IMR-90 (cell line): ENCODE measurements at regions of chr13 and their contacts with region 1.

Region 1: DNA sequence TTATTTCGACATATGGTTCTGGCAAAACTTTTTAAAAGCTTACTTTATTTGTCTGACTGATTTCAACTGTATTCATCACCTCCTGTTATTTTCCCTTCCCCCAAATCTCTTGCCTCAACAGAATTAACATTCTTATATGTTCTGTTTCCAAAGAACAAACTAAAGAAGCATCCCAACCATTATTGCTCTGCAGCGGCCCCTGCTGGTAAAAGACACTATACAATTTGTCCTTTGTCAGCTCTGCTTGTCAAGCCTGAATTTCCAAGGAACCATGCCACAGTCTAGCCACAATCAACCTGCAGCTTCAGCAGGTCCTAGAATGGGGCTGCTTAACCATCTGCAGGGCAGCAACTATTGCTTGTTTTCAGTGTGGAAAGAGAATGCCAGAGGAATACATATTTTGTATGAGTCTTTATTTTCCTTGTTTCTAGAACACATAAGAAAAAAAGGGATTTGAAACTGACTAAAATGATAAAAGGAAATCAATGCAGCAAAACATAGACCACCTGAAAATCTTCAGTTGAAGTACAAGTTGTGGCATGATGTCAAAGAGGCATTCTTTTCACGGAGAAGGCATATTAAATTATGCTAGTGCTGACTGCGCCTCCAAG is 845.3 kb downstream of the DIAPH3 start:
- DNase-seq: peak; percentile 46
- ATAC-seq: peak; percentile 77
- H3K4me3 ChIP-seq: no peak overlapping the region
- H3K27ac ChIP-seq: no peak overlapping the region
- H3K4me1 ChIP-seq: no peaks in the 10 kb centered on the region
- H3K27me3 ChIP-seq: no peaks in the 10 kb centered on the region
- CTCF ChIP-seq: peak; percentile 69
- POLR2A ChIP-seq: no peak
- RAD21 ChIP-seq: peak; percentile 67

Region 2: DNA sequence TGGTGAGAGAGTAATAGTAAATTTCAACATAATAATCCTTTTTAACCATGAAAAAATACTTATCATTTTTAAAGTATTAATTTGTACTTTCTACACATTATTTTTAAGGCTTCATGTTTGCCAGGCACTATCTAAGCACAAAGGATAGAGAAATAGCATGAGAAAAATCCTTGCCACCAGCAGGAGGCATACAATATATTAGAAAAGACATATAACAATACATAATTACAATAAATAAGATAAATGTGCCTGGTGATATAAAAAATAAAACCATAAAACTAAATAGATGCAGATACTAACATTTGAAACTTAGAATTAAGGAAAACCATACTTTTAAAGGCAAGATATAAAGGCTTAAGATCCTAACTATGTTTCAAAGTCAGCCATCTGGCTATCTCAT is 411.1 kb before region 1 on chr13:
- CTCF ChIA-PET with region 1: no interaction called
- POLR2A ChIA-PET with region 1: no interaction called
- dilution Hi-C with region 1: no loop called
- in situ Hi-C with region 1: no loop called
- intact Hi-C with region 1: loop called (anchors 2 kb)
- DNase-seq: peak; percentile 0
- ATAC-seq: no peak
- H3K4me3 ChIP-seq: no peak overlapping the region
- H3K27ac ChIP-seq: no peak overlapping the region
- H3K4me1 ChIP-seq: no peaks in the 10 kb centered on the region
- H3K27me3 ChIP-seq: no peaks in the 10 kb centered on the region
- CTCF ChIP-seq: peak; percentile 27; the same call in 1 of the 2 replicates
- POLR2A ChIP-seq: no peak
- RAD21 ChIP-seq: peak; percentile 32

Region 3: GRCh38 chr13:59120297-59120843 is 198.1 kb before region 1 on chr13:
- CTCF ChIA-PET with region 1: no interaction called
- POLR2A ChIA-PET with region 1: no interaction called
- dilution Hi-C with region 1: no loop called
- in situ Hi-C with region 1: no loop called
- intact Hi-C with region 1: no loop called
- DNase-seq: peak; percentile 60
- ATAC-seq: peak; percentile 73
- H3K4me3 ChIP-seq: peak overlapping the region; percentile 23; the same call in 1 of the 2 replicates
- H3K27ac ChIP-seq: no peak overlapping the region
- H3K4me1 ChIP-seq: peaks cover 2% of the 10 kb centered on the region
- H3K27me3 ChIP-seq: no peaks in the 10 kb centered on the region
- CTCF ChIP-seq: no peak
- POLR2A ChIP-seq: no peak
- RAD21 ChIP-seq: no peak

Region 4: GRCh38 chr13:59801107-59801880 is 482.9 kb after region 1 on chr13:
- CTCF ChIA-PET with region 1: no interaction called
- POLR2A ChIA-PET with region 1: no interaction called
- dilution Hi-C with region 1: no loop called
- in situ Hi-C with region 1: no loop called
- intact Hi-C with region 1: no loop called
- DNase-seq: no peak
- ATAC-seq: no peak
- H3K4me3 ChIP-seq: no peak overlapping the region
- H3K27ac ChIP-seq: no peak overlapping the region
- H3K4me1 ChIP-seq: no peaks in the 10 kb centered on the region
- H3K27me3 ChIP-seq: no peaks in the 10 kb centered on the region
- CTCF ChIP-seq: no peak
- POLR2A ChIP-seq: no peak
- RAD21 ChIP-seq: no peak